ENCODE measurements at regions of chr6 and their contacts with region 1.

Region 1: DNA sequence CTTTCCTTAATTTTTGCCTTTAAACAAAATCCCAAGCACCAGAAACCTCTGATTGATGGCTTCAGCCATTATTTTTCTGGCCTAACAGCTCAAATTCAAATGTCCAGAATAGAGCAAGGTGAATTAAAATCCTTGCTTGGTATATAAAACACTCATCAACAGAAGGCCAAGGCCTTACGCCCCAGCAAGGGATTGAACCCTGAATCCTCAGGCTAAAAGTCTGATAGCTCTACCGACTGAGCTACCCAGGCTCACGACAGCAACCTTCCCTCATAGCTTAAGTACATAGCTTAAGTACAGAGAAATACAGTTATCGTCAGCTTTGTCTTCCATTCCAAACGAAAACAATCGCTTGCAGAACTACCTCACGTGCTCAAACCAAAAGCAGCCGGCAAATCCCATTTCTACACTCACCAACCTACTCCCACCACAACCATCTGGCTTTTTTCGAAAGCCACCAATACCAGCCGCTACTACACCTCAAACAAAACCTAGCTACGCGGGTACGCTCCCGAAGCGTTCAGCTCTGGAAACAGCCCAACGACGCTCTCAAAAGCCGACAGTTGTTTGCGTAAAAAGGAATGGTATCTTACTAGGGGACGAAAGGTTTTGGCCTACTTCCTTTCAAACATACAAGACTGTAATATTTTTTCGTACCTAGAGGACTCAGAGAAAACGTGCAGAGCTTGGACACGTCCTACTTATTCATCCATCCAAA is 167.5 kb downstream of the GPX5 start:
- DNase-seq: no peak
- H3K4me3 ChIP-seq: no peak overlapping the region
- H3K27ac ChIP-seq: no peak overlapping the region
- H3K4me1 ChIP-seq: no peaks in the 10 kb centered on the region
- H3K27me3 ChIP-seq: no peaks in the 10 kb centered on the region
- CTCF ChIP-seq: no peak

Region 2: GRCh38 chr6:28648035-28648877 is 44.9 kb before region 1 on chr6:
- CTCF ChIA-PET with region 1: no interaction called
- POLR2A ChIA-PET with region 1: no interaction called
- intact Hi-C with region 1: no loop called
- DNase-seq: peak; percentile 68 to 74
- H3K4me3 ChIP-seq: peak overlapping the region; percentile 74
- H3K27ac ChIP-seq: no peak overlapping the region
- H3K4me1 ChIP-seq: peaks cover 11% of the 10 kb centered on the region; the same call in 1 of the 2 replicates
- H3K27me3 ChIP-seq: no peaks in the 10 kb centered on the region
- CTCF ChIP-seq: no peak

Region 3: DNA sequence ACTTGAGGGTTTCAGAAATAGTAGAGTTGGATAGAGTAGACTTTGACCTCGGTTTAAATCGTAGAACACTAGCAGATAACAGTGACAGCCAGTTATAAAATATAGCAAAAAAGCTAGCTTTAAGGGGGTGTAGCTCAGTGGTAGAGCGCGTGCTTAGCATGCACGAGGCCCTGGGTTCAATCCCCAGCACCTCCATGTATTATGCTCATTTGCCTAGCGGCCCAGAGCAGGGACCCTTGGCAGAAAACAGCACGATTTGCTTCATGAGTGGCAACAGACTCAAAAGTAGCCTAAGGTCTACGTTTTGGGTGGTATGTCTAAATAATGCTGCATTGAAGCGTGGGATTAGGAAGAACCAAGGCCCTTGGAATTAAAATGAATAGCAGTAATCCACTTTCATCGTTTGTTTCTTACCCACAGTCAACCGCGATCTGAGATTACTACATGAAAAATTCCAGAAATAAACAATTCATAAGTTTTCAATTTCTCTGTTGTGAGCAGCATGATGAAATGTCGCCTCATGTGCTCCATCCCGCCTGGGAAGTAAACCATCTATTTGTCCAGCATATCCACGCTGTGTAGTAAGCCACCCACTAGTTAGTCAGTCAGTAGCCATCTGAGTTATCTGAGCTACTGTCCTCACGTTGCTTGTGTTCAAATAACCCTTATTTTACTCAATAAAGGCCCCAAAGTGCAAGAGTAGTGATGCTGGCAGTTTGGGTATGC is 17.4 kb after region 1 on chr6:
- CTCF ChIA-PET with region 1: no interaction called
- POLR2A ChIA-PET with region 1: interaction called, 16 read pairs
- intact Hi-C with region 1: no loop called
- DNase-seq: peak in 1 of 2 experiments; percentile 52
- H3K4me3 ChIP-seq: peak overlapping the region; percentile 69
- H3K27ac ChIP-seq: no peak overlapping the region
- H3K4me1 ChIP-seq: no peaks in the 10 kb centered on the region
- H3K27me3 ChIP-seq: no peaks in the 10 kb centered on the region
- CTCF ChIP-seq: no peak

Measured in PC-9 (cell line).